Lower leg skin (tissue), 4 donors: ENCODE measurements at regions of chr17 and their contacts with region 1.

Region 1: GRCh38 chr17:15260376-15261257 is 4.5 kb downstream of the PMP22 start:
- DNase-seq: peak; percentile 85 to 98
- H3K4me3 ChIP-seq: peak overlapping the region; percentile 68
- CTCF ChIP-seq: no peak
- POLR2A ChIP-seq: no peak

Region 2: DNA sequence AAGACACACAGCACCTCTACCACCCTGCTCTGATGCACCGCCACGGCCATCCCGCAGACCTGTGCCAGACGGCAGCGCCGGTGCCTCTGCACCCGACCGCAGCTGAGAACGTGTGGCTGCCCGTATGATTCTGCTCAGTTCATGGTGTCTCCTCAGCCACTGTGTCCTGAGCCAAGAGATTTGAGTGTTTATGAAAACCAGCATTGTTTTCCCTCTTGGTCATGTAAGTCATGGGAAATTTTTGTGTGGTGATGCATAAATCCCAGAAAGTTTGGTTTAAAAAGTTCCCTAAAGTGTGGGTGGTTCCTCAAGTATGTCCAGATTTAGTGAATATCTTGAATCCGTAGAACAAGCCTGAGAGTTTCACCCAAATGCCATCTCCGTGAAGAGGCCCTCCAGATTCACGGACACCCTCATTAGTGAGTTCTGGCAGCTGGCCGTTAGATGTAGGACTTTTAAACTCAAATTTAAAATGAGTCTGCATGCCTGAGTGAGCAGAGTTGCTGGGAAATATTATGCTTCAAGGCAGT is 149.2 kb after region 1 on chr17:
- intact Hi-C with region 1: loop called (anchors 10 kb)
- DNase-seq: peak; percentile 67 to 91
- H3K4me3 ChIP-seq: no peak overlapping the region
- CTCF ChIP-seq: no peak
- POLR2A ChIP-seq: peak in 1 of 2 donors; percentile 30

Region 3: GRCh38 chr17:15502369-15503112 is 241.9 kb after region 1 on chr17:
- intact Hi-C with region 1: loop called (anchors 2 kb)
- DNase-seq: peak; percentile 90 to 98
- H3K4me3 ChIP-seq: no peak overlapping the region
- CTCF ChIP-seq: peak in 2 of 3 donors; percentile 9 to 78
- POLR2A ChIP-seq: no peak